AG04449 (cell line): ENCODE measurements at regions of chr13 and their contacts with region 1.

Region 1: DNA sequence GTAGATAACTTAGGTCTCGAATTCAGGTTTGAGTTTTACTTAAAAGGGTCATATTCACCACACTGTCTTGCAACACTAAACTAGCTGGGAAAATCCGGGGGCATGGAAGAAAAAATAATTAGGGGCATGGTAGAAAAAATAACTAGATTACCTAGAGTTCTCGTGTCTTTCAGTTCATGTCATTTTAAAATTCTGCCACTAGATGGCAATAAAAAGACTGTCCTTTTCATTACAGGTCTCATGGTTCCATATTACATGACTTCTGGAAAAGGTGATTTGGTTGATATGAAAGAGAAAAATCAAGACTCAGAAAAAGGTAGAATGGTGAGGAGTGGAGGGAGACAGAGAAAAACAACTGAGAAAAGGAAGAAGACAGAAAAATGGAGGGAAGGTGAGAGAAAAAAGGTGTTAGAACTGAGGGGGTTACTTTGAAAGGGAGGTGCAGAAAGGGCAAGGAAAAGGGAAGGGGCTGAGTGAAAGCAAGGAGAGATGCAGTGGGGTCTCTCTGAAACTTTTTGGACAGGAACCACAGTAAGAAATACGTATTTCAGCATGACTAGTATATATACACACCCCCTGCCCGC is 299.0 kb downstream of the KLF12 start:
- DNase-seq: no peak
- H3K4me3 ChIP-seq: no peak overlapping the region
- CTCF ChIP-seq: peak; percentile 17

Region 2: GRCh38 chr13:73822668-73823592 is 12.3 kb before region 1 on chr13:
- CTCF ChIA-PET with region 1: interaction called, 13 read pairs
- POLR2A ChIA-PET with region 1: no interaction called
- DNase-seq: no peak
- H3K4me3 ChIP-seq: no peak overlapping the region
- CTCF ChIP-seq: no peak

Region 3: GRCh38 chr13:73849292-73849691 is 14.1 kb after region 1 on chr13:
- CTCF ChIA-PET with region 1: interaction called, 15 read pairs
- POLR2A ChIA-PET with region 1: no interaction called
- DNase-seq: no peak
- H3K4me3 ChIP-seq: no peak overlapping the region
- CTCF ChIP-seq: peak; percentile 36